ENCODE measurements at regions of chr2 and their contacts with region 1.

Region 1: GRCh38 chr2:203972066-203972465 is 35.5 kb downstream of the ICOS start:
- DNase-seq: no peak
- ATAC-seq: no peak
- H3K4me3 ChIP-seq: no peak overlapping the region
- H3K27ac ChIP-seq: peak overlapping the region; percentile 67 to 88
- H3K4me1 ChIP-seq: peaks cover 9% of the 10 kb centered on the region in 2 donors
- H3K27me3 ChIP-seq: no peaks in the 10 kb centered on the region

Region 2: DNA sequence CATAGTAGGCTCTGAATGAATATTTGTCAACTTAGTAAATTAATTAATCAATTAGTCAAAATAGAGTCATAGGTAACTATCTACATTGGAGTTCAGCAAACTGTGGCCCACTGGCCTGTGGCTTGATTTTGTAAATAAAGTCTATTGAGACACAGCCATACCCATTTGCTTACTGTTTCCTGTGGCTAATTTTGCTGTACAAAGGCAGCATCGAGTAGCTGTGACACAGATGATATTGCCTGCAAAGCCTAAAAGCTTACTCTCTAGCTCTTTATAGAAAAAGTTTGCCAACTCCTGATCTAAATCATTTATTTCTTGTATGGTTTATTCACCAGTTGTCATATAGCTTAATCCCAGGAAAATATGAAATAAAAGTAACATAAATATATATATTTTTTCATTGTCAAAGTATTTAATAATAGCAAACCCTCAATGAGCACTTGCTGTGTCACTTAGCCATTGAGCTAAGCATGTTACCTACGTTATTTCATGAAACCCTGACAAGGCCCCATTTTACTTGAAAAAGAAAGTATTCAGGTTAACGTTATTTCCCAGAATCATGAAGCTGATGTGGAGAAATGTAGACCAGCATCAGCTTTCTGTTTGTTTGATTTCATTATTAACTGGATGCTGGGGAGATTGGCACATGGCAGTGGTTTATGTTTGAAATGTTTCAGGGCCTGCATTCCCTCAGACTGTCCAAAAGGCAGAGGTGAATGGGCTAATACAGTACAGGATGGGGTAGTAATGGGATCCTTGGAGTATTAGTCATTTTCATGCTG is 34.1 kb after region 1 on chr2:
- intact Hi-C with region 1: loop called in 1 of 2 experiments (anchors 5 kb)
- DNase-seq: no peak
- ATAC-seq: no peak
- H3K4me3 ChIP-seq: no peak overlapping the region
- H3K27ac ChIP-seq: no peak overlapping the region
- H3K4me1 ChIP-seq: peaks cover 2 to 7% of the 10 kb centered on the region in 2 donors
- H3K27me3 ChIP-seq: no peaks in the 10 kb centered on the region

Region 3: GRCh38 chr2:204072443-204073324 is 100.6 kb after region 1 on chr2:
- intact Hi-C with region 1: no loop called
- DNase-seq: no peak
- ATAC-seq: no peak
- H3K4me3 ChIP-seq: no peak overlapping the region
- H3K27ac ChIP-seq: no peak overlapping the region
- H3K4me1 ChIP-seq: peaks cover 0 to 4% of the 10 kb centered on the region in 2 donors
- H3K27me3 ChIP-seq: no peaks in the 10 kb centered on the region

Region 4: DNA sequence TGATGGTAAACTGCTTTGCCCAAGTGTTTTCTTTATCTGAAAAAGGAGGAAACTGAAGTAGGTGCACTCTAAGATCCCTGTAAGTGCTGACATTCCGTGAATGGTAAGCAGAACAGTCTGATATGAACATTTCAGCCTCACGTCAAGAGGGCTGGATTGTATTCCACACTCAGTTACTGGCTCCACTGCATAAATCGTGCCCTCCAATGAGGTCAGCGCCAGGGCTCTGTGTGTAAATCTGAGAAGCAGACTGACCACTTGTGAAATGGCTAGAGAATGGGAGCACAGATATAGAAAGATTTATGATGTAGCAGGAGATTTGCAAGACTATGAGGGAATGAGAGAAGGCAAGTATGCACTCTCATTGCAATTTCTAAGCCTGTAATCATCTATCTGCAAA is 117.5 kb after region 1 on chr2:
- intact Hi-C with region 1: no loop called
- DNase-seq: no peak
- ATAC-seq: no peak
- H3K4me3 ChIP-seq: no peak overlapping the region
- H3K27ac ChIP-seq: no peak overlapping the region
- H3K4me1 ChIP-seq: no peaks in the 10 kb centered on the region
- H3K27me3 ChIP-seq: no peaks in the 10 kb centered on the region